ENCODE measurements at regions of chr3 and their contacts with region 1.

Region 1: DNA sequence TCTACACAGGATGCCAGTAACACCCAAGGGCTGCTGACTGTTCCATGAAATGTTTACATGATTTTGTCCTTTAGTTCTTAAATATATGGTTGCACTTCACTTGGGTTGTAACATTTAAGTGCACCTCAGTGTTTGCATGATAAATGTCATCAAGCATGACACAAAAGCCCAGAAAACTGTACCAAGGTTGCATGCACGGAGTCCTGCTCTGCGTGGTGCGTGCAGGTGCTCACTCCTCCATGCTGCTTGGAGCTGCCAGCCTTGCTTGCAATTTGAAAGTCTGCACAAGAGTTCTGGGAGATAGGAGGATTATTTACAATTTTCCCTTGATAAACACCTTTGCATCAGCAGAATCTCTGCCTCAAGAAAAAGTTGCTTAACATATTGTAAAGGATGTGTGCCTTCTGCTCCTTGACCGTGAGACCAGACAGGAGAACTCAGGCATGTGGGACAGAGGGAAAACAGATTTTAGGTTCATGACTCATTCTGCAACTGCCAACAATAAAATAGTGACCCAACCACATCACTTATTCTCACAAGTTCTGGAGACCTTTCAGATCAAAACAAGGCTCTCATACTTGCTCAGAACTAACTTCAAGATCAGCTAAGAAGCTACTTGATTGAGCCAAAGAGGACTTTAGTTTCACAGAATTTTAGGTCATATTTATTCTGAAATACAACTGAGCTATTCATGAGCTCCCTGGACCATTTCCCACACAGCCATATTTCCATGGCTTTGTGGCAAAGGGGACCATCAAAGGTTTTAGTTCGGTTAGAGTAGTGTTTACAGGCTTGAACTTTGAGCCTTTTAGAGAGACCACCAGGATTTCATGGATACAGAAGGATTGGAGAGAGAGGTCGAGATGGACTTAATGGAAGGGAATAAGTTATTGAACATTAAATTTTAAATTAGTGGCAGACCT is 128.4 kb upstream of the ZBED2 start:
- DNase-seq: peak; percentile 31
- H3K4me3 ChIP-seq: no peak overlapping the region
- H3K27ac ChIP-seq: peak overlapping the region in 3 of 4 donors; percentile 12 to 48 (median 22)
- H3K4me1 ChIP-seq: peaks cover 0 to 51% (median 44%) of the 10 kb centered on the region in 4 donors
- H3K27me3 ChIP-seq: no peaks in the 10 kb centered on the region
- CTCF ChIP-seq: no peak
- EP300 ChIP-seq: no peak
- POLR2A ChIP-seq: no peak

Region 2: DNA sequence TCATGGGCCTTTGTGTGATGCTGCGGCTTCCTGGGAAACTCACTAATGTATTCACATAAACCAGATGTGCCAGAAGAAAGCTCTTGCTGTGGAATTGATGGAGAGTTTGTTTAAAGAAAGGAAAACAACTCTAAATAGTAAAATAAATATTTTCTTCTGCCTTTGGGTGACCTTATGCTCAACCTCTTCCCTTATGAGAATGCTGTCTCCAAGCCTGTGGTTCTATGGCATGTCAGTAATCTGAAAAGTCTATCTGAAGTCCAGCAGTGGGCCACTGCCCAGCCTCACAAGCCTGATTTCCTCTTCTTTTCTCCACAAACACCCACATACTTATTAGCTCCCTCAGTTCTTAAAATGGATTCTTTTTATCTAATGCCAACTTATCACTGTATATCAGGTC is 85.6 kb after region 1 on chr3:
- intact Hi-C with region 1: loop called (anchors 5 kb)
- DNase-seq: no peak
- H3K4me3 ChIP-seq: no peak overlapping the region
- H3K27ac ChIP-seq: no peak overlapping the region
- H3K4me1 ChIP-seq: peaks cover 8 to 42% (median 19%) of the 10 kb centered on the region in 4 donors
- H3K27me3 ChIP-seq: no peaks in the 10 kb centered on the region
- CTCF ChIP-seq: no peak
- EP300 ChIP-seq: no peak
- POLR2A ChIP-seq: no peak

Measured in esophagus muscularis mucosa (tissue), 4 donors.